ENCODE measurements at regions of chr12 and their contacts with region 1.

Region 1: GRCh38 chr12:13233830-13234641 is 37.5 kb downstream of the EMP1 start:
- DNase-seq: peak; percentile 25
- H3K4me3 Mint-ChIP-seq: no peak overlapping the region
- H3K27ac Mint-ChIP-seq: no peak overlapping the region
- H3K4me1 Mint-ChIP-seq: no peaks in the 10 kb centered on the region
- H3K27me3 Mint-ChIP-seq: peaks cover 6% of the 10 kb centered on the region

Region 2: GRCh38 chr12:13094347-13094746 is 139.7 kb before region 1 on chr12:
- CTCF ChIA-PET with region 1: interaction called, 9 read pairs
- POLR2A ChIA-PET with region 1: no interaction called
- intact Hi-C with region 1: loop called (anchors 1 kb)
- DNase-seq: no peak
- H3K4me3 Mint-ChIP-seq: no peak overlapping the region
- H3K27ac Mint-ChIP-seq: no peak overlapping the region
- H3K4me1 Mint-ChIP-seq: peaks cover 30% of the 10 kb centered on the region
- H3K27me3 Mint-ChIP-seq: no peaks in the 10 kb centered on the region

Region 3: DNA sequence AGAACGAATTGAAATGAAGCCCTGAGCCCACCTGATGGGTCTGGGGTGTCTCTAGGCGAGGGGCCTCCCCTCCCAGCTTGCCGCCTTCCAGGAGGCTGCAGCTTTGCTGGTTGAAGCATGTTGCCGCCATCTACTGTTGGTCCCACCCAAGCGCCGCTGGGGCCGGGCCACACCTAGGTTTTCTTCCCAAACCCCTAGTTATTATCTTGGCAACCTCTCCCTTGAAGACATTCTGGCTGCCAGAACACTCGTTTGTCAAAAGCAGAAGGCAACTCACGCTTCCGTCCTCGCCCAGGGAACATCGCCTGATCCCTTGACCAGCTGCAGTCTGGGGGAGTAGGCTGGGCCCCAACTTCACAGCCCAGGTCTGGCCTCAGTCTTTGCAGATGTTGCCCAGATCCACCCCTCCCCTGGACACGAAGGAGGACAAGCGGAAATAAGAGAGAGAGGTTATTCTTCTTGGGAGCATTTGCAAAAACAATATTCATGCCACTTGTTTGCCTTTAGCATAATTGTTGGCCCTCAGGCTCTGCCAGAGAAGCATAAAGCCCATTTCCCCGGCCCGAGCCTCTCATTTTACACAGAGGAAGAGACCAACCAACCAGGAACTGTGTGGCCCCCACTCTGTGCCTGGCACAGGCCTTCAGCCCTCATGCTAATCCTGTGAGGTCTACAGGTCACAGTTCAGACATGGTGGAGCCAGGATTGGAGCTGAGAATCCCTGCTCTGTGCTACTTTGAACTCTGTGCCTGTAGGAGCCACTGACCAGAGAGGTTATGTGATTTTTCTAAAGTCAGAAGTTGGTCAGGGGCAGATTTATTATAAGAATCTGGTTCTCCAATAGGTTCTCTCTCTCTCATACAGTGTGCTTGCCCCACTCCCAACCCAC is 30.8 kb before region 1 on chr12:
- CTCF ChIA-PET with region 1: no interaction called
- POLR2A ChIA-PET with region 1: no interaction called
- intact Hi-C with region 1: no loop called
- DNase-seq: peak; percentile 35
- H3K4me3 Mint-ChIP-seq: no peak overlapping the region
- H3K27ac Mint-ChIP-seq: no peak overlapping the region
- H3K4me1 Mint-ChIP-seq: peaks cover 34% of the 10 kb centered on the region
- H3K27me3 Mint-ChIP-seq: peaks cover 3% of the 10 kb centered on the region

Measured in activated CD4-positive, alpha-beta memory T cell treated with anti-CD3 and anti-CD28 coated beads for 36 hours (primary cell).